GM10248 (cell line): ENCODE measurements at regions of chr17 and their contacts with region 1.

Region 1: DNA sequence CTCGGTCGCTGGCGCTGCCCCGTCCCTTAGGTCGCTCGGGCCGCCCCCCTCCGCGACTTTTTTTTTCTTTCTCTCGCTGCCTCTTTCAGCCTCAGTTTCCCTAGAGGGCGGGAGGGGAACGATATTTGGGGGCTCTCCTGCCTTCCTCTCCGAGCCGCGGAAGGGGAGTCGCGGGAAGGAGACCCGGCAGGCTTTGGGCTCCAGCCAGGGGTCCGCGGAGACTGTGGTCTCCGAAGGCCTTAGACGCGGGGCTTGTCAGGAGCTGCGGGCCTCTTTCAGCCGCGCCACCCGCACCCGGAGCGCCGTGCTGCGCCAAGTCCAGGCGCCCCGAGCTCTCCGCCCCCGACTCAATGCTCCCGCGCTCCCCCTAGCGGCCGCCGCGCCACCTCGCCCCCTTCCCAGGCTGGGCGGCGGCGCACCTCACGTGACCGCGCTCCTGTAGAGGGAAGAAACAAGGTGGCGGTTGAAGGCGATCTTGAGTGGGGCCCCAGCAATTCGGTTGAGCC is at the start of gene LRRC37B:
- DNase-seq: peak; percentile 89
- CTCF ChIP-seq: peak; percentile 96

Region 2: GRCh38 chr17:31919802-31920525 is 87.0 kb before region 1 on chr17:
- CTCF ChIA-PET with region 1: no interaction called
- POLR2A ChIA-PET with region 1: no interaction called
- DNase-seq: no peak
- CTCF ChIP-seq: no peak

Region 3: GRCh38 chr17:32020943-32021614 is 14.1 kb after region 1 on chr17:
- CTCF ChIA-PET with region 1: interaction called, 29 read pairs
- POLR2A ChIA-PET with region 1: no interaction called
- DNase-seq: no peak
- CTCF ChIP-seq: no peak

Region 4: GRCh38 chr17:32033223-32033622 is 26.2 kb after region 1 on chr17:
- CTCF ChIA-PET with region 1: no interaction called
- POLR2A ChIA-PET with region 1: no interaction called
- DNase-seq: no peak
- CTCF ChIP-seq: no peak

Region 5: GRCh38 chr17:32142038-32142856 is 135.2 kb after region 1 on chr17 and contains the start of gene RHOT1:
- CTCF ChIA-PET with region 1: interaction called, 40 read pairs
- POLR2A ChIA-PET with region 1: no interaction called
- DNase-seq: peak; percentile 82
- CTCF ChIP-seq: peak; percentile 69